ENCODE measurements at regions of chr9 and their contacts with region 1.

Region 1: DNA sequence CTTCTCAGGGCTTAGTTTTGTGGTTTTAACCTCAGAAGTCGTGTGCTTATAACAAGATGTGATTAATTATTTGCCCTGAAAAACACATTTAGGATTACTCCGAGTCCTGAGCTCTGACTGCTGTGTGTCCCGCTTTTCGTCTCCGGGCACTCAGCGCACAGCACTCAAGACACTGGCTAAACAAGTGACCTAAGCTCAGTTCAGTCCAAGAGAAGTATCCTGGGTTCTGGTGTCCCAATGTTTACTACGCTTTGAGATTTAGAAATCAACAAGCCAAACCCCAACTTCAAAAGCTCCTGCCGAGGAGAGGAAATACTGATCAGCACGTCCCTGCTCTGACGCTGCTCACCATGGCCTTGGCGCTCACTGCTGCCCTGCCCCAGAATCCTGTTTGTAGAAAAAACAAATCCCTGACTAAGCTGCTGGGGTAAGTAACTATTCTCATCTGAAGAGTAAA is 53.2 kb downstream of the IPPK start:
- DNase-seq: no peak
- H3K4me3 ChIP-seq: no peak overlapping the region
- H3K27ac ChIP-seq: peak overlapping the region; percentile 61 to 87 (median 73)
- H3K4me1 ChIP-seq: peaks cover 0 to 42% (median 7%) of the 10 kb centered on the region in 4 donors
- H3K27me3 ChIP-seq: no peaks in the 10 kb centered on the region
- CTCF ChIP-seq: no peak
- EP300 ChIP-seq: no peak
- POLR2A ChIP-seq: no peak

Region 2: GRCh38 chr9:92332577-92333281 is 284.0 kb before region 1 on chr9:
- in situ Hi-C with region 1: loop called in 1 of 4 experiments (anchors 10 kb)
- intact Hi-C with region 1: no loop called
- DNase-seq: no peak
- H3K4me3 ChIP-seq: no peak overlapping the region
- H3K27ac ChIP-seq: no peak overlapping the region
- H3K4me1 ChIP-seq: no peaks in the 10 kb centered on the region
- H3K27me3 ChIP-seq: no peaks in the 10 kb centered on the region
- CTCF ChIP-seq: no peak
- EP300 ChIP-seq: no peak
- POLR2A ChIP-seq: no peak

Region 3: GRCh38 chr9:92501671-92502393 is 114.9 kb before region 1 on chr9:
- in situ Hi-C with region 1: no loop called
- intact Hi-C with region 1: loop called (anchors 10 kb)
- DNase-seq: peak; percentile 26
- H3K4me3 ChIP-seq: no peak overlapping the region
- H3K27ac ChIP-seq: peak overlapping the region; percentile 52 to 75 (median 60)
- H3K4me1 ChIP-seq: peaks cover 4 to 21% (median 4%) of the 10 kb centered on the region in 4 donors
- H3K27me3 ChIP-seq: no peaks in the 10 kb centered on the region
- CTCF ChIP-seq: peak; percentile 36 to 48 (median 42)
- EP300 ChIP-seq: no peak
- POLR2A ChIP-seq: no peak